PC-9 (cell line): ENCODE measurements at regions of chr21 and their contacts with region 1.

Region 1: GRCh38 chr21:33491373-33492102 is at the start of gene DNAJC28:
- DNase-seq: peak; percentile 70 to 90
- H3K4me3 ChIP-seq: peak within 1 kb of the TSS; percentile 63
- H3K27ac ChIP-seq: no peak within 1 kb of the TSS
- H3K4me1 ChIP-seq: no peaks in the 10 kb centered on the region
- H3K27me3 ChIP-seq: no peaks in the 10 kb centered on the region
- CTCF ChIP-seq: no peak
- total RNA-seq, gene DNAJC28: 1.1 and 1.3 TPM in 2 replicates

Region 2: DNA sequence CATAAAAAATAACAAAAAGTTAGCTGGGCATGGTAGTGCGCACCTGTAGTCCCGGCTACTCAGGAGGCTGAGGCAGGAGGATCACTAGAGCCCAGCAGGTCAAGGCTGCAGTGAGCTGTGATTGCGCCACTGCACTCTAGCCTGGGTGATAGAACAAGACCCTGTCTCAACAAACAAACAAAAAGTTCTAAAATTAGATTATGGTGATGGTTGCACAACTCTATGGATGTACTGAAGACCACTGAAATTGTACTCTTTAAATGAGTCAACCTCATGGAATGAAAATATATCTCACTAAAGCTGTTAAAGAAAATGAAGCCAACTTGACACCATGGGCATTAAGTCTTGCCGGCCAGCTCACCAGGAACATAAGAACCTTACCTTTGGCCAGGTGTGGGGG is 1183.8 kb before region 1 on chr21:
- CTCF ChIA-PET with region 1: no interaction called
- POLR2A ChIA-PET with region 1: interaction called, 14 read pairs
- intact Hi-C with region 1: no loop called
- DNase-seq: no peak
- H3K4me3 ChIP-seq: no peak overlapping the region
- H3K27ac ChIP-seq: no peak overlapping the region
- H3K4me1 ChIP-seq: no peaks in the 10 kb centered on the region
- H3K27me3 ChIP-seq: no peaks in the 10 kb centered on the region
- CTCF ChIP-seq: no peak

Region 3: GRCh38 chr21:33479679-33480480 is 11.7 kb before region 1 on chr21 and contains the start of gene TMEM50B:
- CTCF ChIA-PET with region 1: interaction called, 3 read pairs
- POLR2A ChIA-PET with region 1: interaction called, 22 read pairs
- intact Hi-C with region 1: no loop called
- DNase-seq: peak; percentile 80 to 90
- H3K4me3 ChIP-seq: peak within 1 kb of the TSS; percentile 86
- H3K27ac ChIP-seq: peak within 1 kb of the TSS; percentile 43
- H3K4me1 ChIP-seq: 0 out of 2 replicates have a peak, but pooled peaks cover 4% of the 10 kb centered on the region
- H3K27me3 ChIP-seq: no peaks in the 10 kb centered on the region
- CTCF ChIP-seq: no peak
- total RNA-seq, gene TMEM50B: 11.7 and 14.2 TPM in 2 replicates

Region 4: DNA sequence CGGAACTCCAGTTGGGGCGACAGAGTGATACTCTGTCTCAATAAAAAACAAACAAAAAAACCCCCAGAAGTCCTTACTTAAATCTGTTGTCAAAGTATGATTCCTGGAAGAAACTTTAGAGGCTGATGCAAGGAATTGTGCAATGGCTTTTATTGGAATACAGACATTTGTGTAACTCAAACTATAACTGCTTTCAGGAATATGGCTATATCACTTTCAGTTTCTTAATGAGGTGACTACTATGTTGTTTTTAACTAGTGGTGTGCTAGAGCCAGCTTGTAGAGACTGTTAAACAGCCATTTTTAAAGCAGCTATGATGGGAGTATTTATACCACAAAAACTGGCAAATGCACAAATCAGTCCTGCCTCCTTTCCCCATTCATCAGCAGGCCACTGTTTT is 22.7 kb after region 1 on chr21:
- CTCF ChIA-PET with region 1: no interaction called
- POLR2A ChIA-PET with region 1: interaction called, 15 read pairs
- intact Hi-C with region 1: no loop called
- DNase-seq: no peak
- H3K4me3 ChIP-seq: no peak overlapping the region
- H3K27ac ChIP-seq: no peak overlapping the region
- H3K4me1 ChIP-seq: no peaks in the 10 kb centered on the region
- H3K27me3 ChIP-seq: no peaks in the 10 kb centered on the region
- CTCF ChIP-seq: no peak